CD8-positive, alpha-beta T cell (primary cell): ENCODE measurements at regions of chr10 and their contacts with region 1.

Region 1: DNA sequence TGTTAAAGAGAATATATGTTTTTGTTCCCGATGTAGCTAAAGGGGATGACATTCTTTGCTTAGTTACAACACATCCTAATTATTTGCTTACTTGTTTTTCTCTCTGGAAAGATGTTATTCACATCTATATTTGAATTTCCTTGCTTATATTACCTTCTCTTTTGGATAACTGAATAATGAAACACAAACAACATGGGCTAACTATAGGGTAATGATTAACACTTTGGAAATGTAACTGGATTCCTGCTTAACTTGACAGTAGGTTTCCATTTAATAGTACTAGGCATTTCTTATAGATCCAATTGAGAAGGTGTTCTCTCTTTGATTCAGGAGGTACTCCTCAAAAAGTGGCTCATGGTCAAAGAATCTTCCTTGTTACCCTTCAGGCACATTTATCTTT is 141.1 kb downstream of the CCSER2 start:
- DNase-seq: no peak
- ATAC-seq: no peak
- H3K4me3 ChIP-seq: no peak overlapping the region
- H3K4me3 Mint-ChIP-seq: no peak overlapping the region
- H3K27ac ChIP-seq: no peak overlapping the region
- H3K27ac Mint-ChIP-seq: no peak overlapping the region
- H3K4me1 ChIP-seq: no peaks in the 10 kb centered on the region
- H3K4me1 Mint-ChIP-seq: peaks cover 20% of the 10 kb centered on the region
- H3K27me3 ChIP-seq: no peaks in the 10 kb centered on the region
- H3K27me3 Mint-ChIP-seq: no peaks in the 10 kb centered on the region
- CTCF ChIP-seq: no peak

Region 2: DNA sequence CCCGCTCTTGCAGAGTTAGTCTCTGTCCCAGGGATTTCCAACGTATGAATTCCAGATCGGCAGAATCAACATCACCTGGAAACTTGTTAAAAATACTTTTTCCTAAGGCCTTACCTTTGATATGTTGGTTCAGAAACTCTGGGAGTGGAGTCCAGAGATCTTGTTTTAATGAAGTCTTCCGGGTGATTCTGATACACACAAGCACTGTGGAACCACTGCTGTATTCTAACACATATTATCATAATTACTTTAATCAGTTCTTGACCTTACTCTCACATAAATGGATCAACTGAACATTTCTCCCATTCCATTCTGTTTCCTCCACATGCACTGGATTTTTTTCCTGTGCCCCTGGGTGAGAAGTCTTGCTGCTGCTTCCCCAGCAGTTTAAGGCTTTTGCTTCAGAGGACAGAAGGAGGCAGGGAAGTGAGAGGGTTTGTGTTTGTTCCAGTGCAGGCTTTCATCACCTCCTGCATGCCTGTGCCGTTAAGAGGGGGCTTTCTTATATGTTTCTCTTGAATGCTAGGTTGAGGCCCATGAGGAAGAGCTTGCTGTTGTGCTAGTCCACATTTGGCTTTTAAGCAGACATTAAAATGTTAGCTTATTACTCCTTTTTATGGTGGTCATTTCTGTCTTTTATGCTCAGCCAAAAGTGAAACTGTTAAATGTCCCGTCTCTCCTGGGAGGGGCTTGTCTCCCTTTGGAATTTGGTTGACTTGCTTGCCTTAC is 108.7 kb before region 1 on chr10:
- CTCF ChIA-PET with region 1: no interaction called
- POLR2A ChIA-PET with region 1: no interaction called
- intact Hi-C with region 1: no loop called
- DNase-seq: peak in 1 of 9 experiments; percentile 22
- ATAC-seq: no peak
- H3K4me3 ChIP-seq: no peak overlapping the region
- H3K4me3 Mint-ChIP-seq: peak overlapping the region; percentile 20
- H3K27ac ChIP-seq: no peak overlapping the region
- H3K27ac Mint-ChIP-seq: peak overlapping the region; percentile 66
- H3K4me1 ChIP-seq: peaks cover 58% of the 10 kb centered on the region
- H3K4me1 Mint-ChIP-seq: peaks cover 86% of the 10 kb centered on the region
- H3K27me3 ChIP-seq: no peaks in the 10 kb centered on the region
- H3K27me3 Mint-ChIP-seq: no peaks in the 10 kb centered on the region
- CTCF ChIP-seq: no peak

Region 3: GRCh38 chr10:84412482-84412881 is 57.0 kb before region 1 on chr10:
- CTCF ChIA-PET with region 1: no interaction called
- POLR2A ChIA-PET with region 1: no interaction called
- intact Hi-C with region 1: no loop called
- DNase-seq: no peak
- ATAC-seq: no peak
- H3K4me3 ChIP-seq: no peak overlapping the region
- H3K4me3 Mint-ChIP-seq: no peak overlapping the region
- H3K27ac ChIP-seq: no peak overlapping the region
- H3K27ac Mint-ChIP-seq: no peak overlapping the region
- H3K4me1 ChIP-seq: peaks cover 5% of the 10 kb centered on the region
- H3K4me1 Mint-ChIP-seq: peaks cover 57% of the 10 kb centered on the region
- H3K27me3 ChIP-seq: no peaks in the 10 kb centered on the region
- H3K27me3 Mint-ChIP-seq: no peaks in the 10 kb centered on the region
- CTCF ChIP-seq: no peak

Region 4: DNA sequence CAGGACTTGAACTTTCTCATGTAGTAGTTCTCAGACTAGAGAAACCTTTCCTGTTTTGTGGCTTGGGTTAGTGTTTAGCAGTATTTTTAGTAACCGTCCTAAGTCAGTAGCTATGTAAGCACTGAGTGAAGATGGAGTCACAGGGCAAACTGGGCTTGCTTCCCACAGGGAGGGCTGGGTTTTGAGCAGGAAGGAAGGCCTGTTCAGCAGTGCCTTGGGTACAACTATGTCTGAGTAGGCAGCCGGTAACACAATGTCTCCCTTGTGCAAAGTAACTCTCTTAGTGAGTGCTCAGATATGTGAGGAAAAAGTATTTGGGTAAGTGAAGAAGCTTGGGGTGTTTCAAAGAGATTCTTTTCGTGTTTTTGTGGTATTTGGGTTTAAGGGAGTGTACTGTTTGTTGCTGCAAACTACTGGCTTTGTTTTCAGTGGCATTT is 44.7 kb before region 1 on chr10:
- CTCF ChIA-PET with region 1: interaction called, 7 read pairs
- POLR2A ChIA-PET with region 1: no interaction called
- intact Hi-C with region 1: loop called in 1 of 2 experiments (anchors 5 kb)
- DNase-seq: peak in 3 of 9 experiments; percentile 20 to 51 (median 23)
- ATAC-seq: peak; percentile 80
- H3K4me3 ChIP-seq: no peak overlapping the region
- H3K4me3 Mint-ChIP-seq: peak overlapping the region; percentile 33
- H3K27ac ChIP-seq: peak overlapping the region; percentile 3 to 45
- H3K27ac Mint-ChIP-seq: peak overlapping the region; percentile 88
- H3K4me1 ChIP-seq: peaks cover 30% of the 10 kb centered on the region
- H3K4me1 Mint-ChIP-seq: peaks cover 73% of the 10 kb centered on the region
- H3K27me3 ChIP-seq: no peaks in the 10 kb centered on the region
- H3K27me3 Mint-ChIP-seq: no peaks in the 10 kb centered on the region
- CTCF ChIP-seq: no peak

Region 5: GRCh38 chr10:84458903-84459302 is 10.6 kb before region 1 on chr10:
- CTCF ChIA-PET with region 1: no interaction called
- POLR2A ChIA-PET with region 1: no interaction called
- intact Hi-C with region 1: no loop called
- DNase-seq: no peak
- ATAC-seq: no peak
- H3K4me3 ChIP-seq: no peak overlapping the region
- H3K4me3 Mint-ChIP-seq: no peak overlapping the region
- H3K27ac ChIP-seq: no peak overlapping the region
- H3K27ac Mint-ChIP-seq: no peak overlapping the region
- H3K4me1 ChIP-seq: no peaks in the 10 kb centered on the region
- H3K4me1 Mint-ChIP-seq: peaks cover 46% of the 10 kb centered on the region
- H3K27me3 ChIP-seq: no peaks in the 10 kb centered on the region
- H3K27me3 Mint-ChIP-seq: no peaks in the 10 kb centered on the region
- CTCF ChIP-seq: no peak

Region 6: DNA sequence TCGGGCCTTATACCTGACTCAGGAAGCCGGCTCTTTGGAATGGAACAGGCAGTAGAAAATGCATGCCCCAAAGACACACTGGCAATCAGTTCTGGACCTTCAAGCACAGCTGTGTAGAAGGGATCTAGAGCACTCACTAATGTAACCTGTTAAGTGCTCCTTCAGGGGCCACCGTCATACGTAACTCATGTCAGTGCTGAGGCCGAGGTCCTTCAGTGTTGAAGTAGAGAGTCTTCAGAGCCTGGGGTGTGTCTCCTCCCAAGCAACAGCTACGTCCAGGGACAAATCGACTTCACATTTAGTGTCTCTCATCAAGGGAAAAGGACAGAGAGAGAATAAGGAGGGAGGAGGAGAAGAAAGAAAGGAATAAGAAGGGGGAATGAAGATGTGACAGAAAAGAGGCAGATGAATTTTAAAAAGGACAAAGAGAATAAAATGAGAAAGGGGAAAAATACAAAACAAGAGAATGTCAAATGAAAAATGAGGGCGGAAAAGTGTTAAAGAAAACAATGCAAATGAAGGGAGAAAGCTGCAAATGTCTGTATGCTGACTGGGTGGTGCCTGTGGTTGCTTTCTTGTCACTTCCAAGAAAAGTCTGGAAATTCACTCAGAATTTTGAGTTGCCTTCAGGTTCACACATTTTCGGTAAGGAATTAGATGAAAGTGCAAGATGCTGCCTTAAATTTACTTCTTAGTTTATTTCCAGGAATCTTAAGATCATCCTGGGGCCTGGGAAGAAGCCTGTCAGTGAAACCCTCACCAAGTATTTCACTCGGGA is 907.7 kb after region 1 on chr10:
- CTCF ChIA-PET with region 1: no interaction called
- POLR2A ChIA-PET with region 1: no interaction called
- intact Hi-C with region 1: no loop called
- DNase-seq: no peak
- ATAC-seq: no peak
- H3K4me3 ChIP-seq: no peak overlapping the region
- H3K4me3 Mint-ChIP-seq: no peak overlapping the region
- H3K27ac ChIP-seq: no peak overlapping the region
- H3K27ac Mint-ChIP-seq: no peak overlapping the region
- H3K4me1 ChIP-seq: no peaks in the 10 kb centered on the region
- H3K4me1 Mint-ChIP-seq: no peaks in the 10 kb centered on the region
- H3K27me3 ChIP-seq: no peaks in the 10 kb centered on the region
- H3K27me3 Mint-ChIP-seq: peaks cover 6% of the 10 kb centered on the region
- CTCF ChIP-seq: no peak